ENCODE measurements at regions of chr5 and their contacts with region 1.

Region 1: GRCh38 chr5:154405078-154405792 is 40.6 kb upstream of the SAP30L start:
- DNase-seq: peak; percentile 49 to 75 (median 55)
- H3K4me3 ChIP-seq: no peak overlapping the region
- H3K4me3 Mint-ChIP-seq: peak overlapping the region in 6 of 7 donors; percentile 28 to 74 (median 58)
- H3K27ac ChIP-seq: no peak overlapping the region
- H3K27ac Mint-ChIP-seq: peak overlapping the region in 4 of 8 donors; percentile 17 to 31 (median 26)
- H3K4me1 ChIP-seq: peaks cover 8% of the 10 kb centered on the region
- H3K4me1 Mint-ChIP-seq: peaks cover 8 to 19% (median 16%) of the 10 kb centered on the region in 3 donors
- H3K27me3 ChIP-seq: no peaks in the 10 kb centered on the region
- H3K27me3 Mint-ChIP-seq: no peaks in the 10 kb centered on the region

Region 2: DNA sequence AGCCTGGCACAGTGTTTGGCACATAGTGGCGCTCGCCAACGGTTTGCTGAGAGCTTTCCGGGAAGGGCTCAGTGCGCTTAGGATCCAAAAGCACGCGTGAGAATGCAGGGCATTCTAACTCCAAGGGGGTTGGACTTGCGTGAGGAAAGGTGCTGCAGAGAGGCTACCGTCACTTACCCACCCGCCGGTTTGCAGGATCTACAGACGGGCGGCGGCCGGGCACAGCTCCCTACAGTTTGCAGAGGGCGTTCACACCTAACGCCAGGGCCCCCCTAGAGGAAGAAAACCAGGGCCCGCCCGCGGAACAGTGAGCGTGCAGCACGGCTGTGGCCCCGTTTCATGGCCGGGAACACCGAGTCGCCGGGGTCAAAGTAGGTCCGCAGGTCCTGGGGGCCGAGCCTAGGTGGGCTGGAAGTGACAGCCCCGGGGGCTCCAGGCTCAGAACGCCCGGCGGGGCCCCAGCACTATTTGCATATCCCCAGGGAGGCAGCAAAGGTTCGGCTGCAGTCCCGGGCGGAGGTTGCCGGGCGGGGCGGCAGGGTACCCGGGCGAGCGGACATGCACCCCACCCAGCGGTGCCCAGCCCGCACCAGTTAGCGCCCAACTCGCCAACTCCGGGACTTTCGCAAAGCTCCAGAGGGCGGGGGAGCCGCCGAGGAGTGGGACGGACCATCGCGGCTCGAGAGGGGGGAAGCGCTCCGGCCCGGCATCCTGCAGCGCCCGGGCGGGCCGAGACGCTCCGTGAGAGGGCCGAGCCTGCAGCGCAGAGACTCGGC is 215.2 kb before region 1 on chr5:
- CTCF ChIA-PET with region 1: interaction called, 17 read pairs
- POLR2A ChIA-PET with region 1: interaction called, 3 read pairs
- DNase-seq: peak; percentile 74 to 86 (median 80)
- H3K4me3 ChIP-seq: peak overlapping the region; percentile 60
- H3K4me3 Mint-ChIP-seq: peak overlapping the region; percentile 84 to 95 (median 90)
- H3K27ac ChIP-seq: peak overlapping the region; percentile 76
- H3K27ac Mint-ChIP-seq: peak overlapping the region; percentile 40 to 93 (median 84)
- H3K4me1 ChIP-seq: peaks cover 29% of the 10 kb centered on the region
- H3K4me1 Mint-ChIP-seq: peaks cover 43 to 54% (median 50%) of the 10 kb centered on the region in 3 donors
- H3K27me3 ChIP-seq: no peaks in the 10 kb centered on the region
- H3K27me3 Mint-ChIP-seq: peaks cover 0 to 3% of the 10 kb centered on the region in 2 donors

Region 3: GRCh38 chr5:154196955-154197652 is 208.1 kb before region 1 on chr5:
- CTCF ChIA-PET with region 1: interaction called, 15 read pairs
- POLR2A ChIA-PET with region 1: no interaction called
- DNase-seq: peak in 1 of 5 donors; percentile 30
- H3K4me3 ChIP-seq: no peak overlapping the region
- H3K4me3 Mint-ChIP-seq: peak overlapping the region; percentile 3 to 71 (median 18)
- H3K27ac ChIP-seq: peak overlapping the region; percentile 26
- H3K27ac Mint-ChIP-seq: peak overlapping the region; percentile 22 to 97 (median 95)
- H3K4me1 ChIP-seq: peaks cover 53% of the 10 kb centered on the region
- H3K4me1 Mint-ChIP-seq: peaks cover 62 to 96% (median 92%) of the 10 kb centered on the region in 3 donors
- H3K27me3 ChIP-seq: no peaks in the 10 kb centered on the region
- H3K27me3 Mint-ChIP-seq: no peaks in the 10 kb centered on the region

Region 4: GRCh38 chr5:154302161-154302560 is 103.1 kb before region 1 on chr5:
- CTCF ChIA-PET with region 1: no interaction called
- POLR2A ChIA-PET with region 1: no interaction called
- DNase-seq: no peak
- H3K4me3 ChIP-seq: no peak overlapping the region
- H3K4me3 Mint-ChIP-seq: no peak overlapping the region
- H3K27ac ChIP-seq: no peak overlapping the region
- H3K27ac Mint-ChIP-seq: no peak overlapping the region
- H3K4me1 ChIP-seq: no peaks in the 10 kb centered on the region
- H3K4me1 Mint-ChIP-seq: peaks cover 0 to 6% (median 0%) of the 10 kb centered on the region in 3 donors
- H3K27me3 ChIP-seq: no peaks in the 10 kb centered on the region
- H3K27me3 Mint-ChIP-seq: no peaks in the 10 kb centered on the region

Region 5: DNA sequence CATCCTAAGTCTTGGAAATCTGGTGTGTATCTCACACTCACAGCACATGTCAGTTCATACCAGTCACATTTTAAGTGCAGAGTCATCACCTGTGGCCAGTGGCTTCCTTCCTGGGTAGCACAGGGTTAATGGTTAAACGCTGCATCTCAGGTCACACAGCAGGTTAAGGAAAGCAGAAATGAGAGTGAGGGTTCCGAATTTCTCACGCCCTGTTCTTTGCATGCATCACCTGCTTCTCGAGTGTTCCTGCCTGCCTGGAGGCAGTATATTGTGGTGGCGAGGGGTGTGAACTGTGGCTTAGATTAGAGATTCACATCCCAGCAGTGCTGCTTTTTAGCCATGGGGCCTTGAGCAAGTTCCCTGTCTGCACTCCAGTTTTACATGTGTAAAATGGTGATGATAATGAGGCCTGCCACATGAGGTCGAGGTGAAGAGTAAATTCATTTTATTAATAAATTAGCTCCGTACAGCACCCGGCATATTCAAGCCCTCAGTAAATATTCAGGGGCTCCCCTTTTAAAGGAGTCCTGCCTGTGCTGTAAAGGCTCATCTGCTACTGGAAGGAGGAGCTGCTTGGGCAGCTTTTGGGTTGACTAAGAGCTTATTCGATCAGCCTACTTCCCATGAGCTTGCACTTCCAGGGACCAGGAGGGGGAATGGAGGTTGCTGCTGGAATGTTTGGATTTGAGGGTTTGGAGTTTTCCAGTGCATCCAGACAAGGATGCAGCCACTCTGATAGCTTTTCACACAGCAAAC is 20.6 kb before region 1 on chr5:
- CTCF ChIA-PET with region 1: interaction called, 14 read pairs
- POLR2A ChIA-PET with region 1: no interaction called
- DNase-seq: peak in 4 of 5 donors; percentile 24 to 66 (median 42)
- H3K4me3 ChIP-seq: no peak overlapping the region
- H3K4me3 Mint-ChIP-seq: peak overlapping the region; percentile 12 to 83 (median 78)
- H3K27ac ChIP-seq: peak overlapping the region; percentile 13
- H3K27ac Mint-ChIP-seq: peak overlapping the region; percentile 90 to 99 (median 97)
- H3K4me1 ChIP-seq: peaks cover 18% of the 10 kb centered on the region
- H3K4me1 Mint-ChIP-seq: peaks cover 31 to 34% (median 31%) of the 10 kb centered on the region in 3 donors
- H3K27me3 ChIP-seq: no peaks in the 10 kb centered on the region
- H3K27me3 Mint-ChIP-seq: no peaks in the 10 kb centered on the region

Region 6: GRCh38 chr5:154461531-154461930 is 56.3 kb after region 1 on chr5:
- CTCF ChIA-PET with region 1: no interaction called
- POLR2A ChIA-PET with region 1: no interaction called
- DNase-seq: no peak
- H3K4me3 ChIP-seq: no peak overlapping the region
- H3K4me3 Mint-ChIP-seq: no peak overlapping the region
- H3K27ac ChIP-seq: no peak overlapping the region
- H3K27ac Mint-ChIP-seq: no peak overlapping the region
- H3K4me1 ChIP-seq: no peaks in the 10 kb centered on the region
- H3K4me1 Mint-ChIP-seq: no peaks in the 10 kb centered on the region
- H3K27me3 ChIP-seq: no peaks in the 10 kb centered on the region
- H3K27me3 Mint-ChIP-seq: no peaks in the 10 kb centered on the region

Measured in CD8-positive, alpha-beta memory T cell (primary cell).